ENCODE measurements at regions of chr11 and their contacts with region 1.

Region 1: DNA sequence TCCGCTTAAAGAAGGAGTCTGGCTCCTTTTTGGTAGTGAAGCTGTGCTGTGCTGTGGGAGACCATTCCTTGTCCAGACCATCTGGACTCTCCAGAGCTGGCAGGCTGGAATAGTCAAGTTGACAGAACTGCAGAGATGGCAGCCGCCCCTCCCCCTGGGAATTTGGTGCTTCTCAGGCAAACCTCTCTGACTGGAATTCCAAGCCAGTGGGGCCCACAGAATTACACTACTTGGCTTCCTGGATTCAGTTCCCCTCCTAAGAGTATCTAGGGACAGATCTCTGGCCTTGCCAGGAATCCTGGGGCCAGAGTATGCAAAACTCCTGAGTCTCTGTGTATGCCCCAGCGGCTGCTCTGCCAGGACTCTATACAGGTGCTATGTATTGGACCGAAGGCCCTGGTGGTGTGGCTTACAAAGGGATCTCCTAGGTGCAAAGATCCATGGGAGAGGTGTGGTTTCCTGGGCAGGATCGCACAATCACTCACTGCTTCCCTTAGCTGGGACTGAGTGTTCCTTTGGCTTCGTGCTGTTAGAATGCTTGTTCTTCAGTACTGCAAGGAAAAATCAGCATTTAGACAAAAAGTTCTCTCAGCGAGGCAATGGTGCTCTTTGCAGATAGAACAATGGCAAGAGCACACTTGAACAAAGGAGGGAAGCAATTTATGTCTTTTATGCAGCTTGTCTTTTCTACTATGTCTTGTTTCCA is 86.8 kb downstream of the PRMT3 start:
- DNase-seq: no peak
- ATAC-seq: no peak
- H3K4me3 ChIP-seq: no peak overlapping the region
- H3K27ac ChIP-seq: no peak overlapping the region
- H3K4me1 ChIP-seq: peaks cover 8% of the 10 kb centered on the region
- H3K27me3 ChIP-seq: no peaks in the 10 kb centered on the region
- CTCF ChIP-seq: no peak

Region 2: GRCh38 chr11:20226933-20227332 is 247.4 kb before region 1 on chr11:
- CTCF ChIA-PET with region 1: no interaction called
- POLR2A ChIA-PET with region 1: no interaction called
- intact Hi-C with region 1: no loop called
- DNase-seq: peak; percentile 5
- ATAC-seq: no peak
- H3K4me3 ChIP-seq: no peak overlapping the region
- H3K27ac ChIP-seq: no peak overlapping the region
- H3K4me1 ChIP-seq: no peaks in the 10 kb centered on the region
- H3K27me3 ChIP-seq: peaks cover 17% of the 10 kb centered on the region; the same call in 1 of the 2 replicates
- CTCF ChIP-seq: no peak

Region 3: DNA sequence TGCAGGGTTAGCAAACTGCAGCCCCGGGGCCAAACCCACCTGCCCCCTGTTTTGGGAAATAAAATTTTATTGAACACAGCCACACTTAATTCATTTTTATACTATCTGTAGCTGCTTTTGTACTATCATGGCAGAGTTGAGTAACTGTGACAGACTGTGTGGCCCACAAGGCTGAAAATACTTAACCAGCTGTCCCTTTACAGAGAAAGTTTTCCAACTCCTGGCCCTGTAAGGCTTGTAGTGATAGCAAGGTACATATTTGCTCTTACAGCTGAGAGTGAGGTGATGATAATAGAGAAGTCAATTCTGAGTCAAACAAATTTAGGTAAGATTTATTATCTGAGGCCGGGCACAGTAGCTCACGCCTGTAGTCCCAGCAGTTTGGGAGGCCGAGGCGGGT is 37.7 kb after region 1 on chr11:
- CTCF ChIA-PET with region 1: no interaction called
- POLR2A ChIA-PET with region 1: interaction called, 27 read pairs
- intact Hi-C with region 1: no loop called
- DNase-seq: no peak
- ATAC-seq: no peak
- H3K4me3 ChIP-seq: no peak overlapping the region
- H3K27ac ChIP-seq: no peak overlapping the region
- H3K4me1 ChIP-seq: no peaks in the 10 kb centered on the region
- H3K27me3 ChIP-seq: no peaks in the 10 kb centered on the region
- CTCF ChIP-seq: no peak

Region 4: GRCh38 chr11:20609727-20610707 is 135.7 kb after region 1 on chr11:
- CTCF ChIA-PET with region 1: no interaction called
- POLR2A ChIA-PET with region 1: no interaction called
- intact Hi-C with region 1: no loop called
- DNase-seq: peak; percentile 71
- ATAC-seq: peak; percentile 96
- H3K4me3 ChIP-seq: peak overlapping the region; percentile 51
- H3K27ac ChIP-seq: no peak overlapping the region
- H3K4me1 ChIP-seq: peaks cover 6% of the 10 kb centered on the region; the same call in 1 of the 2 replicates
- H3K27me3 ChIP-seq: peaks cover 20% of the 10 kb centered on the region
- CTCF ChIP-seq: peak; percentile 87

Measured in PC-3 (cell line).